ENCODE measurements at regions of chr9 and their contacts with region 1.

Region 1: DNA sequence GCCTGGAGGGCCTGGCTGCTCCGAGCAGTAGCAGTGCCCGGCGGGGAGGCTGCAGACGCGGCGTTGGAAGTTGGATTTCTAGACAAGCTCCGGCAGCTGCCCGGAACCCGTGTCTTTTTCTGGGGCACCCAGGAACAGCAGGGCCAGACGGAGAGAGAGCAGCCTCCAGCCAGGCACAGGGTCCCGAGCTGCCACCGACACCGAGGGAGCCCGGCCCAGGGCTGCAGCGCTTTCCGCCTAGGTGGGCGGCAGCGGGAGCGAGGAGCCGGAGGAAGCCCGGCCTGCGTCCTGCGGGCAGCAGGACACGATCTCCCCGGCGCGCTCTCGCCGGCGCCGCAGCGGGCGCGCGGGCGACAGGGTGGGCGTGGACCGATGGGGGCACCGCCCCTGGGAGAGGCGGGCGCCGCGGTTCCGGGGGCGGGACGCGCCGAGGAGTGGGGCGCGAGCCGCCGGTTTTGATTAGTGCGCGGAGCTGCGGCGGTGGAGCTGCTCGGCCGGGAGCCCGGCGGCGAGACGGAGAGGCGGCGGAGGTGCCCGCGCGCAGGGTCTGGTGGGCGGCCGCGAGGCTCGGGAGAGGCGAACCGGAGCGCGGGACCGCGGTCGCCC is at the start of gene UGCG:
- DNase-seq: peak; percentile 92 to 94 (median 94)
- ATAC-seq: peak; percentile 83
- H3K4me3 ChIP-seq: peak within 1 kb of the TSS; percentile 78
- H3K27ac ChIP-seq: peak within 1 kb of the TSS; percentile 80
- H3K4me1 ChIP-seq: peaks cover 14 to 21% of the 10 kb centered on the region in 2 experiments; a peak in 4 of 5 replicates
- H3K27me3 ChIP-seq: no peaks in the 10 kb centered on the region
- CTCF ChIP-seq: no peak
- EP300 ChIP-seq: no peak
- POLR2A ChIP-seq: peak; percentile 93
- RAD21 ChIP-seq: no peak; a peak in 1 of 4 replicates
- polyA plus RNA-seq, gene UGCG: 29.2 to 31.9 TPM

Region 2: DNA sequence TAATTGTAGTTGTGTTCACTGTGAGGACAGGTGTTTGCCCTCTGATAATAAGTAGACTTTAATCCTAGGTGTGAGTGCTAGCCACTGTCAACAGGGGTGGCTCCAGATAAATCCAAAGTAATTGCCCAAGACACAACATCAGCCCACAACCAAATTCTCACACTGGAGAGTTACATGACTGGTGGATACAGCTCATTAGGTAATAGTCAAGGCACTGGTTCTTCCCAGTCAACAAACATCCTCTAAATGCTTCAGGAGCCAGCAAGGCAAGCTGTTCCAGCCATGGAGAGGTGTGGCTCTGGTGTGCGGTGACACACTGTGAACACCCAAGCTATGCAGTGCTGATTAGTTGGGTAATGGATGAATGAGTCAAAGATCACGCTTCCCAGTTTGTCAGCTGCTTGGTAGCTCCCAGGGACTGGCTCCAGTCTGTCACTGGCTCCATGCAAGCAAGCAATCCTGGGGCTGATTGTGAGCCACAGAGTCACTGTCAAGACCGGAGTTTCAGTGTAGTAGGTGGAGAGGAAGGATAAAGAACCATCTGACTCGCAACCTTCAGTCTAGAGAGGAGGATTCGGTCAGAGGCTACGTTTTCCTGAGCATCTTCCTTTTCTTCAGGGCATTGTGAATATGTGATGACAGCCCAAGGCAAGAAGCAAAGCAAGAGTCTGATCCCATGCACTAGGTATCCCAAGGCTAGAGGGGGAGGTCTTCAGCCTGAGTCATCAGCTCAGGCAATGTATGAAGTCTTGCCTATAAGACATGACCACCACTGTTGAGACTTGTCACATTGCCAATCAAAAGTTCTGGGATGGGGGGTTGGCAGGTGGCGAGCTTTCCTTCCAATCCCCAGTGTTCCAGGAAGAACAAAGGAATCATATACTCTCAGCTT is 63.3 kb after region 1 on chr9:
- CTCF ChIA-PET with region 1: no interaction called
- POLR2A ChIA-PET with region 1: no interaction called
- in situ Hi-C with region 1: no loop called
- intact Hi-C with region 1: loop called (anchors 5 kb)
- DNase-seq: peak in 2 of 4 experiments; percentile 49 to 63
- ATAC-seq: peak; percentile 73
- H3K4me3 ChIP-seq: no peak overlapping the region
- H3K27ac ChIP-seq: no peak overlapping the region; the same call in 2 of the 3 replicates
- H3K4me1 ChIP-seq: peaks cover 4 to 27% of the 10 kb centered on the region in 2 experiments; a peak in 3 of 5 replicates
- H3K27me3 ChIP-seq: no peaks in the 10 kb centered on the region
- CTCF ChIP-seq: no peak
- EP300 ChIP-seq: 0 out of 2 replicates have a peak, but pooled peaks have one; percentile 12
- POLR2A ChIP-seq: no peak
- RAD21 ChIP-seq: no peak